Transverse colon (tissue), 4 donors: ENCODE measurements at regions of chr15 and their contacts with region 1.

Region 1: GRCh38 chr15:39869858-39870515 is 50.1 kb downstream of the GPR176 start:
- DNase-seq: no peak
- H3K4me3 ChIP-seq: no peak overlapping the region
- H3K27ac ChIP-seq: no peak overlapping the region
- H3K4me1 ChIP-seq: peaks cover 0 to 2% (median 0%) of the 10 kb centered on the region in 4 donors
- H3K27me3 ChIP-seq: no peaks in the 10 kb centered on the region
- CTCF ChIP-seq: no peak
- EP300 ChIP-seq: no peak
- POLR2A ChIP-seq: no peak

Region 2: DNA sequence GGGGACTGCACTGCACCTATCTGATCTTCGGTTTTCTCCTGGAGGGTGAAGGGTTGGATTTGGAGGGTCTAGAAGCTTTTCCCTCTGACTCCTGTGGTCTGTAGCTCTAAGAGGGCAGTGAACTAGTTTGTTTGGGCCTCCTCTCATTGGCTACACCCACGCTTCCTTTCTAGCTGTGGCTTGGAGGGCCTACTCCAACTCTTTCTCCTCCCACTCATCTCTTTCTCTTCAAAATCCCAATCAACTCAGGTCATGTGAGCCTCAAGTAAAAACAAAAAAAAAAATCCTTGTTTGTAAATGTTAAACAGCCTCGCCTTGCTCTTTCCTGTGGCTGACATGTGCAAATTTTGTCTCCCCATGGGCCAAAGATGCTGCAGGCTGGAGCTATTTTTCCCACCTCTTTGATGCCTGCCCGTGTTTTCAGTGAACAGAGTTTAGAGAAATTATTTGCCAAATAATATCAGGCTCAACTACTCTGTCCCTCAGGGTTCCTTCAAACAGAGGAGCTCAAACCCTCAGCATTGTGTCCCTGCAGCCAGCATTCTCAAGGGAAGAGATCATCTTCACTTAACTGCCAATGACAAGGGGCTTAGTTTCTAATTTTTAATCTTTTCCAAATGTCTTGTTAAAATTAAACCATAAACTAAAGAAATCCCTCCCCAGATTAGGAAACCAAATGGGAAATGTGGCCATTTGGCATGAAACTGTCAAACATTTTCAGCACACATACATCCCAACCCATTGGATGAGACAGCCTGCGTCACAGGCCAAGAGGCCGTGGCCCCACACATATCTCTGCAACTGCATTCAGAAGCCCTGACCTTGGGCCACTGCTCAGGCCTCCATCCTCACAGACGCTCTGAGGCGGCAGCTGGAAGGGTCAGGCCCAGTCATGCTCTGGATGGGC is 403.9 kb before region 1 on chr15:
- in situ Hi-C with region 1: no loop called
- intact Hi-C with region 1: no loop called
- DNase-seq: peak; percentile 21
- H3K4me3 ChIP-seq: no peak overlapping the region
- H3K27ac ChIP-seq: peak overlapping the region; percentile 39 to 67 (median 50)
- H3K4me1 ChIP-seq: peaks cover 0 to 21% (median 2%) of the 10 kb centered on the region in 4 donors
- H3K27me3 ChIP-seq: no peaks in the 10 kb centered on the region
- CTCF ChIP-seq: no peak
- EP300 ChIP-seq: no peak
- POLR2A ChIP-seq: no peak

Region 3: DNA sequence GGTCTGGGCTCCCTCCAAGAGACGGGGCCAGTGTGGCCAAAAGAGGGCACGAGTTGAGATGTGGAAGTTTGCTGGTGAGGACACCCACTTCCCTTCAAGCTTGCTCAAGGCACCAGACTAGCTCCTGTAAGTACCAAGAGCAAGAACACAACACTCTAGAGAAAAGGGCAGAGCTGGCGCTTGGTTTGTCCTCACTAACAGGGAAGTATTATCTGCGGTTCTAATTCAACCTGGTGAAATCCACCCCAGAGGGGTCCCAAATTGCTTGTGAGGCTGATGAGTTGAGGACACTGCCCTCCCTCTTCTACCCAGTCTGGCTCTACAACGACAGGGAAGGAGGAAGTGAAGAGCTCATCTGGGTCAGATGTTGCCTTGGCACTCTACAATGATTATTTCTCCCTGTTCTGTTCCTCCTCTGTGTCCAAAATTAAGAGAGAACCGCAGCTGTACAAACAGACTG is 70.4 kb before region 1 on chr15:
- in situ Hi-C with region 1: loop called in 1 of 4 experiments (anchors 10 kb)
- intact Hi-C with region 1: no loop called
- DNase-seq: no peak
- H3K4me3 ChIP-seq: no peak overlapping the region
- H3K27ac ChIP-seq: no peak overlapping the region
- H3K4me1 ChIP-seq: no peaks in the 10 kb centered on the region
- H3K27me3 ChIP-seq: no peaks in the 10 kb centered on the region
- CTCF ChIP-seq: no peak
- EP300 ChIP-seq: no peak
- POLR2A ChIP-seq: no peak